CD14-positive monocyte (primary cell): ENCODE measurements at regions of chr11 and their contacts with region 1.

Region 1: GRCh38 chr11:82927254-82927880 is 25.8 kb downstream of the DDIAS start:
- DNase-seq: peak; percentile 34 to 66 (median 60)
- H3K4me3 ChIP-seq: no peak overlapping the region
- H3K4me3 Mint-ChIP-seq: no peak overlapping the region
- H3K27ac ChIP-seq: no peak overlapping the region
- H3K27ac Mint-ChIP-seq: no peak overlapping the region
- H3K4me1 ChIP-seq: no peaks in the 10 kb centered on the region
- H3K4me1 Mint-ChIP-seq: peaks cover 2% of the 10 kb centered on the region
- H3K27me3 ChIP-seq: no peaks in the 10 kb centered on the region
- H3K27me3 Mint-ChIP-seq: no peaks in the 10 kb centered on the region
- CTCF ChIP-seq: peak; percentile 94

Region 2: GRCh38 chr11:82867495-82868082 is 59.8 kb before region 1 on chr11:
- intact Hi-C with region 1: loop called (anchors 2 to 5 kb)
- DNase-seq: peak; percentile 68 to 86 (median 78)
- H3K4me3 ChIP-seq: peak overlapping the region; percentile 25 to 80 (median 71)
- H3K4me3 Mint-ChIP-seq: peak overlapping the region; percentile 78 to 90
- H3K27ac ChIP-seq: peak overlapping the region in 1 of 2 donors; percentile 73
- H3K27ac Mint-ChIP-seq: peak overlapping the region; percentile 57 to 94 (median 82)
- H3K4me1 ChIP-seq: peaks cover 26 to 35% of the 10 kb centered on the region in 2 donors
- H3K4me1 Mint-ChIP-seq: peaks cover 36% of the 10 kb centered on the region
- H3K27me3 ChIP-seq: no peaks in the 10 kb centered on the region
- H3K27me3 Mint-ChIP-seq: no peaks in the 10 kb centered on the region
- CTCF ChIP-seq: peak; percentile 86